Heart right ventricle (tissue), 16 donors: ENCODE measurements at regions of chr2 and their contacts with region 1.

Region 1: DNA sequence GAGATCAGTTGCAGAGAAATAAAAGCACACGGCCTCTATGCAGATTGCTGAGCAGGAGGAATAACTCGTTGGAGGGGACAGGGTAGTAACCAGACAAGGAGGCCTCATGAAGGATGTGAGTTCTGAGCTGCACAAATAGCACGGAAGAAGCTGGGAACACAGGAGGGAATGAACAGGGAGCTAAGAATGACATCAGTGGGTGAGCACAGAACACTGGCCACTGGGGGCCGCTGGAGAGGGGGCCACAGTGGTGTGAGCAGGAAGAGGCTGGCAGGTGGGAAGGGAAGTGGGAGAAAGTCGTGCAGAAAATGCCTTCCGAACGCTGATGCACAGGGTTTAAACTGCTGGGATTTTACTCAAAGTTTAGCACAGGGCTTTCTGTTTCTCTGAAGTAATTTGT is 61.0 kb downstream of the ZAP70 start:
- DNase-seq: no peak
- ATAC-seq: peak in 4 of 8 donors; percentile 40 to 78 (median 71)
- H3K4me3 ChIP-seq: no peak overlapping the region
- H3K27ac ChIP-seq: no peak overlapping the region
- H3K4me1 ChIP-seq: peaks cover 0 to 16% (median 0%) of the 10 kb centered on the region in 9 donors
- H3K27me3 ChIP-seq: no peaks in the 10 kb centered on the region
- CTCF ChIP-seq: peak in 4 of 9 donors; percentile 13 to 54 (median 36)

Region 2: GRCh38 chr2:96065381-96065930 is 1709.0 kb before region 1 on chr2:
- intact Hi-C with region 1: loop called in 1 of 10 experiments (anchors 10 kb)
- DNase-seq: no peak
- ATAC-seq: no peak
- H3K4me3 ChIP-seq: no peak overlapping the region
- H3K27ac ChIP-seq: no peak overlapping the region
- H3K4me1 ChIP-seq: peaks cover 0 to 5% (median 0%) of the 10 kb centered on the region in 9 donors
- H3K27me3 ChIP-seq: no peaks in the 10 kb centered on the region
- CTCF ChIP-seq: no peak

Region 3: GRCh38 chr2:97645695-97646629 is 128.5 kb before region 1 on chr2 and contains the start of gene COX5B:
- intact Hi-C with region 1: no loop called
- DNase-seq: peak; percentile 99 to 100
- ATAC-seq: peak; percentile 99 to 100 (median 99)
- H3K4me3 ChIP-seq: peak within 1 kb of the TSS; percentile 73 to 98 (median 86)
- H3K27ac ChIP-seq: peak within 1 kb of the TSS; percentile 90 to 99 (median 96)
- H3K4me1 ChIP-seq: peaks cover 7 to 32% (median 25%) of the 10 kb centered on the region in 9 donors
- H3K27me3 ChIP-seq: no peaks in the 10 kb centered on the region
- CTCF ChIP-seq: peak in 1 of 9 donors; percentile 3
- total RNA-seq, gene COX5B: 886 to 1,398 (median 1,288) TPM